PC-3 (cell line): ENCODE measurements at regions of chr15 and their contacts with region 1.

Region 1: DNA sequence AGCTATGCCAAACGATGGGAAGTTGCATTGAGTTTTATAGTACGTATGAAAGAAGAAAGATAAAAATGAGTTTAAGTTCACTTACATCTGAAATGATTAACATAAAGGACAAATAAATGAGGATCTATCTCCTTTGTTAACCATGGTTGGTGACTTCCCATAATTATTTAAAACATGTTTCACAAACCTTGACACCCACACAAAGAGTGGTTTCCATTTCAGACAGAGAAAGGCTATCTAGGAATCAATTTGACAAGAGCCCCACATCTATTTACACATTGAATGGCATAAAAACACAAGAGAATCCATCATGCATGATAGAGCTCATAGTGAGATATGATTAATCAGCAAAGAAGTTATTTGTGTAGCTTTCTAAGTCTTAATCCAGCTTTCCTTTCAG is 14.2 kb upstream of the MTMR10 start:
- DNase-seq: no peak
- ATAC-seq: no peak
- H3K4me3 ChIP-seq: no peak overlapping the region
- H3K27ac ChIP-seq: no peak overlapping the region
- H3K4me1 ChIP-seq: no peaks in the 10 kb centered on the region
- H3K27me3 ChIP-seq: peaks cover 60% of the 10 kb centered on the region
- CTCF ChIP-seq: no peak

Region 2: GRCh38 chr15:31111091-31111647 is 105.5 kb after region 1 on chr15:
- CTCF ChIA-PET with region 1: no interaction called
- POLR2A ChIA-PET with region 1: no interaction called
- intact Hi-C with region 1: loop called (anchors 5 kb)
- DNase-seq: no peak
- ATAC-seq: no peak
- H3K4me3 ChIP-seq: no peak overlapping the region
- H3K27ac ChIP-seq: no peak overlapping the region
- H3K4me1 ChIP-seq: no peaks in the 10 kb centered on the region
- H3K27me3 ChIP-seq: peaks cover 27% of the 10 kb centered on the region; the same call in 1 of the 2 replicates
- CTCF ChIP-seq: no peak